Natural killer cell (primary cell): ENCODE measurements at regions of chr12 and their contacts with region 1.

Region 1: DNA sequence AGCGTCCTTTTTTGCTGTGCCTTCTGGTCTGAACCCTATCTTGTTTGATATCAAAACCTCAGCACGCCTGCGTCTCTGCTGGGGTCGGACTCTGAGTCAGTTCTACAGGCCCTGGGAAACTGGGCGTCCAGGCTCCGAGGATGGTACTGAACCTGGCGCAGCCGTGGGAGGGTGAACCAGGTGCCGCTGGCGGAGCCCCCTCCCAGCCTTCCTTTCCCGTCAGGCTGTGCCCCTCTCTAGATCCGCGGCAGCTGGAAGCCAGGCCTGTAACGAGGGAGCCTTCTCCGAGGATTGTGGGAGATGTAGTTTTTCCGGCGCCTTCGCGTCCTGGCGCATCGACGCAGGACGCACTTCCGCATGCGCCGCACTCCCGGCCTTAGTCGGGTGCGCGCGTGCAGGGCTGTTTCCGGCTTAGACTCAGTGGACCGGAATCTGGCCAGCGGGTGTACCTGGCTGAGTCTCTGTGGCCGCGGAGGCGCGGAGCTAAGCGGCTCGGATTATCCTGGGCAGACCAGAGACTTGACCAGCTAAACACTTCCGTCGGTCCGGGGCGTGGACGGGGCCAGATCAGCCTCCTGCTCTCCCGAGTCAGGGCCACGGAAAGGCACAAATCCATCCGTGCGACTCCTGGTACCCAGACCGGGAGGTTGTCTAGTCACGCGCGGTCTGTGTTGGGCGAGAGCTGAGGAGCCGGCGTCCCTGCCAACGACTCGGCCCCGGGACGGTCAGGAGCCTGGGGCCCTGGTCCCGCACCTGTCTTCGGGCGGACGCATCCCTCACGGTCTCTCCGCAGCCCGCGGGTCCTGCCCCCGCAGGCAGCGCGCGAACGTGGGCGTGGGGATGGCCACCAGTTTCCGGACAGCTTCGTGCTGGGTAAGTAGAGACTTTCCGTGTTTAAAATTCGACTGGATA is at the start of gene ZNF26:
- DNase-seq: peak; percentile 80 to 95
- ATAC-seq: peak; percentile 96 to 99 (median 98)
- H3K4me3 ChIP-seq: peak within 1 kb of the TSS; percentile 73
- H3K4me3 Mint-ChIP-seq: peak within 1 kb of the TSS; percentile 92
- H3K27ac ChIP-seq: peak within 1 kb of the TSS; percentile 89
- H3K27ac Mint-ChIP-seq: peak within 1 kb of the TSS; percentile 95 to 96
- H3K4me1 ChIP-seq: peaks cover 23% of the 10 kb centered on the region
- H3K4me1 Mint-ChIP-seq: peaks cover 28 to 34% of the 10 kb centered on the region in 2 donors
- H3K27me3 ChIP-seq: peaks cover 3% of the 10 kb centered on the region
- H3K27me3 Mint-ChIP-seq: peaks cover 3 to 17% of the 10 kb centered on the region in 2 donors
- CTCF ChIP-seq: no peak
- total RNA-seq, gene ZNF26: 38.7 to 45.1 (median 43.0) TPM

Region 2: GRCh38 chr12:132812631-132813305 is 173.5 kb before region 1 on chr12:
- intact Hi-C with region 1: no loop called
- DNase-seq: peak in 1 of 2 donors; percentile 50
- ATAC-seq: peak; percentile 37 to 46 (median 46)
- H3K4me3 ChIP-seq: no peak overlapping the region
- H3K4me3 Mint-ChIP-seq: no peak overlapping the region
- H3K27ac ChIP-seq: no peak overlapping the region
- H3K27ac Mint-ChIP-seq: no peak overlapping the region
- H3K4me1 ChIP-seq: peaks cover 6% of the 10 kb centered on the region
- H3K4me1 Mint-ChIP-seq: peaks cover 11 to 12% of the 10 kb centered on the region in 2 donors
- H3K27me3 ChIP-seq: no peaks in the 10 kb centered on the region
- H3K27me3 Mint-ChIP-seq: no peaks in the 10 kb centered on the region
- CTCF ChIP-seq: no peak

Region 3: DNA sequence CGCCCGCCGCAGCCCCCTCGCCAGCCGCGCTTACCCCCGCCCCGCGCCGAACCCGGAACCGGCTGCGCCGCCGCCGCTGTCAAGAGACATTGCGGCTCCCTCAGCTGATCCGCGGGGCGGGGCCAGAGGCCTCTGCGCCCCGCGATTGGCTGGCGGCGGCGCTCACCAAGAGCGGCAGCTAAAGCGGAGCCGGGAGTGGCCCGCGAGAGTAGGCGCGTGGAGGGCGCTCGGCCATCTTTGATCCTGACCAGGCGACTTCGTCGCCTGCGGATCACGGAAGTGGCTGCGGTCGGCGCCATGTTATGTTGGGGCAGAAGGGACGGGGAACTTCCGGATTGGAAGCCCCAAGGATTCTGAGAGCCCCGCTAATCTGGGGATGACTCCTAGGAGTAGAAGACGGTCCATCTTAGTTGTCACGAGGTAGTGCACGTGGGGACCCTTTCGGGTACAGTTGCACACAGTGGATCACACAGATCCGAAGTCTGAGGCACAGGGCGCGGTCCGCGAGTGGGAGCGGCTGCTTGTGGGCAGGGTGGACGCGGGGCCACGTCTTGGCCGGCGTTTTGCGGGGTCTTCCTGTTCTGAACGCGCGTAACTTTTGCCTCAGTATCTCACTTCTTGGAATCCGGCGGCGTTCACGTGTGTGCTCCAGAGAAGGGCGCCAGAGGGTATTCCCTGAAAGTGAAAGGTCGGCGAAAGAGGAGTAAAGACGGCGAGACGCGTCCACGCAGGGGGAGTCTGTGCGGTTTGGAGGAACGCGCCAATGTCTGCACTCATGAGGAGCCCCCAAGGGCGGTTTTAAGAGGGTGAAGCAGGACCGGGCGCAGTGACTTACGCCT is 98.5 kb before region 1 on chr12 and contains the start of gene CHFR:
- intact Hi-C with region 1: loop called (anchors 2 kb)
- DNase-seq: peak; percentile 92 to 97
- ATAC-seq: peak; percentile 97 to 100 (median 97)
- H3K4me3 ChIP-seq: peak within 1 kb of the TSS; percentile 91
- H3K4me3 Mint-ChIP-seq: peak within 1 kb of the TSS; percentile 98
- H3K27ac ChIP-seq: peak within 1 kb of the TSS; percentile 99
- H3K27ac Mint-ChIP-seq: peak within 1 kb of the TSS; percentile 100
- H3K4me1 ChIP-seq: peaks cover 12% of the 10 kb centered on the region
- H3K4me1 Mint-ChIP-seq: peaks cover 16 to 22% of the 10 kb centered on the region in 2 donors
- H3K27me3 ChIP-seq: no peaks in the 10 kb centered on the region
- H3K27me3 Mint-ChIP-seq: peaks cover 8 to 10% of the 10 kb centered on the region in 2 donors
- CTCF ChIP-seq: no peak
- total RNA-seq, gene CHFR: 161 to 170 (median 168) TPM

Region 4: GRCh38 chr12:132956011-132956788 is 30.1 kb before region 1 on chr12 and contains the start of gene ZNF605:
- intact Hi-C with region 1: loop called (anchors 1 kb)
- DNase-seq: peak; percentile 85 to 94
- ATAC-seq: peak; percentile 94 to 97 (median 95)
- H3K4me3 ChIP-seq: peak within 1 kb of the TSS; percentile 92
- H3K4me3 Mint-ChIP-seq: peak within 1 kb of the TSS; percentile 90
- H3K27ac ChIP-seq: peak within 1 kb of the TSS; percentile 77
- H3K27ac Mint-ChIP-seq: peak within 1 kb of the TSS; percentile 87 to 94
- H3K4me1 ChIP-seq: peaks cover 27% of the 10 kb centered on the region
- H3K4me1 Mint-ChIP-seq: peaks cover 15 to 39% of the 10 kb centered on the region in 2 donors
- H3K27me3 ChIP-seq: no peaks in the 10 kb centered on the region
- H3K27me3 Mint-ChIP-seq: no peaks in the 10 kb centered on the region
- CTCF ChIP-seq: no peak
- total RNA-seq, gene ZNF605: 6.0 to 15.8 (median 7.6) TPM

Region 5: DNA sequence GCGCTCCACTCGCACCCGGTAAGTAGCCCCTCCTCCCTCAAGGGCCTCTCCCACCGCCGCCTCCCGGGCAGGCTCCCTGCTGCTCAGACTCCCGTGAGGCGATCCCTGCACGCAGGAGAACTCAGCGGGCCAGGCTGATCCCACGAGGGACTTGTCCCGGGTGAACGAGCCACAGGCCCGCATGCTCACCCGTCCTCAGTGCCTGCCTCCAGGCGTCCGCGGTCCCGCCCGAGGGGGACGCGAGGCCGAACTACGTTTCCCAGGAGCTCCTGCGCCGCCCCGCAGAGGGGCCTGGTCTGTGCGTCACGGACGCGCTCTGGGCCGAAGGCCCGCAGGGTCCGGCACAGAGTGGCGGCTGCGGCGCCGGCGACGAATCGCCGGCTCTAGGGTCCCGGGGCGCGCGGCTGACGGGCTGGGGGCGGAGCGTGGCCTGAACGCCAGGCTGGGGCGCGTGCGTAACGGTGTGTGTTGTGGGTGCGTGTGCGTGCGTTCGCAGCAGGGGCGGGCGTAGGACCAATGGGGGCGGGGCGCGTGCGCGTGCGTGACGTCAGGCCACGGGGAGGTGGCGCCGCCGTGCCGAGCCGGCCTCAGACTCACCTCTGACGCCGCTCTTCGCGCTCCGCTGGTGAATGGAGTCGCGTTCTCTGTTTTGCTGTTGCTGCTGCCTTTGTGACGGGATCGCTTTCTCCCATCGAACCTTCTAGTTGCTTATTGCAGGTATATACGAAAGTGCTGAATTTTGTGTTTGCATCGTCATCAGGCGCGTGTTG is 144.0 kb after region 1 on chr12 and contains the starts of genes ZNF10 and ZNF891:
- intact Hi-C with region 1: loop called (anchors 1 kb)
- DNase-seq: peak; percentile 98
- ATAC-seq: peak; percentile 87 to 96 (median 87)
- H3K4me3 ChIP-seq: peak within 1 kb of the TSS; percentile 80
- H3K4me3 Mint-ChIP-seq: peak within 1 kb of the TSS; percentile 95
- H3K27ac ChIP-seq: peak within 1 kb of the TSS; percentile 99
- H3K27ac Mint-ChIP-seq: peak within 1 kb of the TSS; percentile 99 to 100
- H3K4me1 ChIP-seq: peaks cover 9% of the 10 kb centered on the region
- H3K4me1 Mint-ChIP-seq: peaks cover 20 to 24% of the 10 kb centered on the region in 2 donors
- H3K27me3 ChIP-seq: no peaks in the 10 kb centered on the region
- H3K27me3 Mint-ChIP-seq: no peaks in the 10 kb centered on the region
- CTCF ChIP-seq: no peak
- total RNA-seq, gene ZNF10: 12.9 to 27.9 (median 26.0) TPM
- total RNA-seq, gene ZNF891: 1.9 to 3.1 (median 2.3) TPM

Region 6: DNA sequence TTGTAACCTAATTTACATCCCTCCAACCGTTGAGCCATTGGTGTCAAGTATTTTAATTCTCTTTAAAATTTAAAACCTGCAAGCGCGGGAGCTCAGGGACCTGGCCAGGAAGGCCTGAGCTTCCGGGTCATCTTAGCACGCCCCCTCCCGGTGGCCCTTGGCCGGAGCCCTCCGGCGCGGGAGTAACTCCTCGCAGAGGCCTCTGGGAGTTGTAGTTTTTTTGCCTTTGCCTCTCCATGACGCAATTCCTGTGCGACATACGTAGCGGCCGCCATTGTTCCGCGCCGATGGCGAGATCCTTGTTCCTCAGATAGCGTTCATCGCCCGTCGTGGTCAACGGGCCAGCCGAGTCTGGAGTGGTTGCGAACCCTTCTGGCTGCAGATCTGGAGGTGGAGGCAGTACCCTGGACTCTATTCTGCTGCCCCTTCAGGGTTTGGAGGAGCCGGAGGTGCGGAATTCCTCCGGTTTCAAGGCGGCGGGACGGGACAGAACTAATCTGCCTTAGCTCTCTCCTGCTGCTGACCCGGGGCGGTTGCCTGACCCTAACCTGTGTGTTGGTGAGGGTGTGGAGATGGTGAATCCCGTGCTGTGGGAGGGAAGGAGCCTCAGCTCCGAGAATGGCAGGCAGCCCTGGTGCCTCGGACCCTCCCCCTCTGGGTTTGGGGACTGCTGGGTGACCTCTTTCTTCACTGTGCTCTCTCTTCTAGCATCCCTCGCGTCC is 195.1 kb after region 1 on chr12 and contains the start of gene ZNF268:
- intact Hi-C with region 1: loop called (anchors 1 kb)
- DNase-seq: peak; percentile 90 to 93
- ATAC-seq: peak; percentile 96
- H3K4me3 ChIP-seq: peak within 1 kb of the TSS; percentile 71
- H3K4me3 Mint-ChIP-seq: peak within 1 kb of the TSS; percentile 96
- H3K27ac ChIP-seq: peak within 1 kb of the TSS; percentile 75
- H3K27ac Mint-ChIP-seq: peak within 1 kb of the TSS; percentile 92 to 96
- H3K4me1 ChIP-seq: peaks cover 9% of the 10 kb centered on the region
- H3K4me1 Mint-ChIP-seq: peaks cover 27 to 38% of the 10 kb centered on the region in 2 donors
- H3K27me3 ChIP-seq: no peaks in the 10 kb centered on the region
- H3K27me3 Mint-ChIP-seq: peaks cover 5 to 8% of the 10 kb centered on the region in 2 donors
- CTCF ChIP-seq: peak; percentile 72
- total RNA-seq, gene ZNF268: 12.7 to 17.5 (median 14.3) TPM